Endothelial cell of umbilical vein (primary cell): ENCODE measurements at regions of chr22 and their contacts with region 1.

Region 1: DNA sequence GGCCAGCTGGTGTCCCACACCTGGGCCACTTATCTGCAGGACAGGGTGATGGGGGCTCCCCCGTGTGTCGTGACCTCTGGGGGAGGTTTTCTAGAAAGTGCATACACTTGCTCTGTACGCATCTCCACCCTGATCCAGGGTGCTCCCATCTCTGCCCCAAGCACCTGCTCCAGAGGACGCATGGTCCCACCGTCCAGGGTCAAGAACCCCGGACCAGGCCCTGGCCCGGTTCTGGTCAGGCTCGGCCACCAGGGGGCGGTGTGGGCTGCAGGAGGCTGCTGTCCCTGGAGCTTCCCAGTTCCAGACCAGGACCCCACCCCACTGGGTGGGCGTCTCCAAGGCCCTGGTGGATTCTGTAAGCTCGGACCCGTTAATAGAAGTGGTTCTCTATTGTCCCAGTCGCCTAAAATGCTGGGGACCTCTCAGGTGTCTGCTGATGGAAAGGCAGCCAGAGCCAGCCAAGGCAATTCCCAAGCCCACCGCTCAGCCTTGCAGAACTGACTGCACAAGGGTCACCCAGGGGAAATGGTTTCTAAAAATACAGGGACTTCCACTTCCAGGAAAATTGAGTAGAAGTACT is 34.7 kb upstream of the SEPTIN5 start:
- DNase-seq: peak; percentile 13
- H3K4me3 ChIP-seq: no peak overlapping the region
- H3K27ac ChIP-seq: no peak overlapping the region
- H3K4me1 ChIP-seq: no peaks in the 10 kb centered on the region
- H3K27me3 ChIP-seq: peaks cover 3 to 22% of the 10 kb centered on the region in 2 experiments
- CTCF ChIP-seq: peak; percentile 80 to 87
- POLR2A ChIP-seq: no peak

Region 2: DNA sequence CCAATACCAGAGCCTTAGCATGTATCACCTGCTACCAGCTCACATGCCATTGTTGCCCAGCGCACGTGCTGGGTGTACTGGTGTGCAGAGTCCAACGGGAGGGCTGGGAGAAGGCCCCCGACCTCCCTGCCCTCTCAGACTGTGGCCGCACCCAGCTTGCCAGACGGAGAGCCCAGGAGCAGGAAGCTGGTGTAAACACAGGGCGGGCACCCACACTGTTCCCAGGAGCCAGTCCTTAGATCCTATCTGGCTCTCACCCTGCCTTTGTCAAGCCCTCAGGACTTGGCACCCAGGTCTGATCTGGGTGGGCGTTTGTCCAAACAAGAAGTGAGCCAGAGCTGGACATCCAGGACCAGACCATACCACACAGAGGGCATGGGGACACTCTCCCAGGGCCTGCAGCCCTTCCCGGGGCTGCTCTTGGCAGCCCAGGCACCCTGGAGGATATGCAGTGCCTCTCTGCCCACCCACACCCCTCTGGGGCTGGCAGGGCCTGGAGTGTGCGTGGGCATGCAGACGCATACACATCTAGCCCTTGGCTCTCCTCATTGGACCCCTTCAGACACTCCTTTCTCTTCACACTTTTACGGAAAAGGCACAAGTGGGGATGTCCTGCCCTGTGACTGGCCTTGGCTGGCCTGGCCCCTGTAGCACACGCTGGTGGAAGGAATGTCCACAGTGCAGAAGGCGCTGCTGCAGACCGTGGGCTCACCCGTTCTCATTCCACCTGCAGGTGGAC is 135.5 kb before region 1 on chr22:
- CTCF ChIA-PET with region 1: no interaction called
- POLR2A ChIA-PET with region 1: no interaction called
- dilution Hi-C with region 1: no loop called
- intact Hi-C with region 1: no loop called
- DNase-seq: no peak
- H3K4me3 ChIP-seq: no peak overlapping the region
- H3K27ac ChIP-seq: no peak overlapping the region
- H3K4me1 ChIP-seq: no peaks in the 10 kb centered on the region
- H3K27me3 ChIP-seq: no peaks in the 10 kb centered on the region
- CTCF ChIP-seq: no peak
- POLR2A ChIP-seq: no peak

Region 3: DNA sequence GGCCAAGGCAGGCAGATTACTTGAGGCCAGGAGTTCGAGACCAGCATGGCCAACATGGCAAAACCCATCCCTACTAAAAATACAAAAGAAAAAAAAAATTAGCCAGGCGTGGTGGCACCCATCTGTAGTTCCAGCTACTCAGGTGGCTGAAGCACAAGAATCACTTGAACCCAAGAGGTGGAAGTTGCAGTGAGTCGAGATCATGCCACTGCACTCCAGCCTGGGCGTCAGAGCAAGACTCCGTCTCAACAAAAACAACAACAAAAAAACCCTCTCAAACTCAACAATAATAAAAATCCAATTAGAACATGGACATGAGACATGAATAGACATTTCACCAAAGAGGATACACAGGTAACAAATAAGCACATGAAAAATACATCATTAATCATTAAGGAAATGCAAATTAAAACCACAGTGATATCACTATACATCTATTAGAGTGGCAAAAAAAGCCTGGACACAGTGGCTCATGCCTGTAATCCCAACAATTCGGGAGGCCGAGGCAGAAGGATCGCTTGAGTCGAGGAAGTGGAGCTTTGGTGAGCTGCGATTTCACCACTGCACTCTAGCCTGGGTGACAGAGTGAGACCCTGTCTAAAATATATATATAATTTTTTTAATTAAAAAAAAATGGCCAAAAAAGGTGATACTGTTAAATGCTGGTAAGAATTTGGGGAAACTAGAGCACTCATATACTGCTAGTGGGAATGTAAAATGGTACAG is 22.0 kb after region 1 on chr22:
- CTCF ChIA-PET with region 1: interaction called, 10 read pairs
- POLR2A ChIA-PET with region 1: no interaction called
- dilution Hi-C with region 1: no loop called
- intact Hi-C with region 1: no loop called
- DNase-seq: no peak
- H3K4me3 ChIP-seq: no peak overlapping the region
- H3K27ac ChIP-seq: no peak overlapping the region
- H3K4me1 ChIP-seq: no peaks in the 10 kb centered on the region
- H3K27me3 ChIP-seq: peaks cover 0 to 7% of the 10 kb centered on the region in 2 experiments
- CTCF ChIP-seq: no peak
- POLR2A ChIP-seq: no peak

Region 4: GRCh38 chr22:19717691-19718455 is 38.3 kb after region 1 on chr22:
- CTCF ChIA-PET with region 1: interaction called, 14 read pairs
- POLR2A ChIA-PET with region 1: no interaction called
- dilution Hi-C with region 1: no loop called
- intact Hi-C with region 1: loop called (anchors 1 kb)
- DNase-seq: peak; percentile 62
- H3K4me3 ChIP-seq: peak overlapping the region; percentile 13 to 51 (median 39)
- H3K27ac ChIP-seq: no peak overlapping the region
- H3K4me1 ChIP-seq: peaks cover 18% of the 10 kb centered on the region
- H3K27me3 ChIP-seq: no peaks in the 10 kb centered on the region
- CTCF ChIP-seq: peak; percentile 73 to 92
- POLR2A ChIP-seq: no peak

Region 5: DNA sequence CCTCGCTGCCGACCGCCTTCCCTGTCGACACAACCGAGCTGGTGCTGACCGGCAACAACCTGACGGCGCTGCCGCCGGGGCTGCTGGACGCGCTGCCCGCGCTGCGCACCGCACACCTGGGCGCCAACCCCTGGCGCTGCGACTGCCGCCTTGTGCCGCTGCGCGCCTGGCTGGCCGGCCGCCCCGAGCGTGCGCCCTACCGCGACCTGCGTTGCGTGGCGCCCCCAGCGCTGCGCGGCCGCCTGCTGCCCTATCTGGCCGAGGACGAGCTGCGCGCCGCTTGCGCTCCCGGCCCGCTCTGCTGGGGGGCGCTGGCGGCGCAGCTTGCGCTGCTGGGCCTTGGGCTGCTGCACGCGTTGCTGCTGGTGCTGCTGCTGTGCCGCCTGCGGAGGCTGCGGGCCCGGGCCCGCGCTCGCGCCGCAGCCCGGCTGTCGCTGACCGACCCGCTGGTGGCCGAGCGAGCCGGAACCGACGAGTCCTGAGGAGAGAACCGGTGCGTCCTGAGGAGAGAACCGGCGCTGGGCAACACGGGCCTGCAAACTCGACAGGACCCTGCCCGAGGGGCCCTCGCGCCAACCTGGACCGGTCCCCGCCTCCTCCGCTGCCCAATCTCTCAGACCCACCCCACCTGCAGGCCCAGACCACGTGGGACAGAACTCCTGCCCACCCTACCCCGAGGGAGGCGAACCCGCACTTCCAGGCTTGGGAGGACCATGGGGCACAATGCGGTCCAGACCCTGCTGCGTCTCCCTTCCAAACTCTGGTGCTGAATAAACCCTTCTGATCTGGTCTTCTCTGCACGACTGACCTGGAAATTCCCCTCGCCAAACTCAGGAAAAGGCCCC is 44.6 kb after region 1 on chr22:
- CTCF ChIA-PET with region 1: interaction called, 12 read pairs
- POLR2A ChIA-PET with region 1: no interaction called
- dilution Hi-C with region 1: no loop called
- intact Hi-C with region 1: no loop called
- DNase-seq: peak; percentile 70
- H3K4me3 ChIP-seq: peak overlapping the region in 2 of 3 experiments; percentile 16 to 22
- H3K27ac ChIP-seq: no peak overlapping the region
- H3K4me1 ChIP-seq: no peaks in the 10 kb centered on the region
- H3K27me3 ChIP-seq: peaks cover 0 to 2% of the 10 kb centered on the region in 2 experiments
- CTCF ChIP-seq: peak; percentile 57 to 64
- POLR2A ChIP-seq: no peak